Head of caudate nucleus (tissue), 42 donors: ENCODE measurements at regions of chr15 and their contacts with region 1.

Region 1: GRCh38 chr15:23857028-23857641 is 170.0 kb upstream of the NDN start:
- DNase-seq: peak in 41 of 42 donors; percentile 23 to 83 (median 63)

Region 2: GRCh38 chr15:23648920-23649515 is 208.1 kb before region 1 on chr15:
- intact Hi-C with region 1: loop called (anchors 5 kb)
- DNase-seq: peak in 38 of 42 donors; percentile 39 to 86 (median 65)

Region 3: GRCh38 chr15:23734862-23735261 is 122.3 kb before region 1 on chr15:
- intact Hi-C with region 1: loop called (anchors 10 kb)
- DNase-seq: peak in 20 of 42 donors; percentile 5 to 75 (median 25)